T-cell (primary cell): ENCODE measurements at regions of chr9 and their contacts with region 1.

Region 1: GRCh38 chr9:131678499-131679111 is 61.3 kb downstream of the RAPGEF1 start:
- DNase-seq: peak; percentile 33 to 78 (median 61)
- ATAC-seq: peak; percentile 83 to 98 (median 97)
- H3K4me3 ChIP-seq: no peak overlapping the region
- H3K4me3 Mint-ChIP-seq: peak overlapping the region; percentile 72 to 81 (median 73)
- H3K27ac ChIP-seq: peak overlapping the region; percentile 88
- H3K27ac Mint-ChIP-seq: peak overlapping the region; percentile 91 to 96
- H3K4me1 ChIP-seq: peaks cover 23 to 58% of the 10 kb centered on the region in 2 experiments
- H3K4me1 Mint-ChIP-seq: peaks cover 92 to 95% (median 95%) of the 10 kb centered on the region in 3 donors
- H3K27me3 ChIP-seq: no peaks in the 10 kb centered on the region
- H3K27me3 Mint-ChIP-seq: no peaks in the 10 kb centered on the region

Region 2: DNA sequence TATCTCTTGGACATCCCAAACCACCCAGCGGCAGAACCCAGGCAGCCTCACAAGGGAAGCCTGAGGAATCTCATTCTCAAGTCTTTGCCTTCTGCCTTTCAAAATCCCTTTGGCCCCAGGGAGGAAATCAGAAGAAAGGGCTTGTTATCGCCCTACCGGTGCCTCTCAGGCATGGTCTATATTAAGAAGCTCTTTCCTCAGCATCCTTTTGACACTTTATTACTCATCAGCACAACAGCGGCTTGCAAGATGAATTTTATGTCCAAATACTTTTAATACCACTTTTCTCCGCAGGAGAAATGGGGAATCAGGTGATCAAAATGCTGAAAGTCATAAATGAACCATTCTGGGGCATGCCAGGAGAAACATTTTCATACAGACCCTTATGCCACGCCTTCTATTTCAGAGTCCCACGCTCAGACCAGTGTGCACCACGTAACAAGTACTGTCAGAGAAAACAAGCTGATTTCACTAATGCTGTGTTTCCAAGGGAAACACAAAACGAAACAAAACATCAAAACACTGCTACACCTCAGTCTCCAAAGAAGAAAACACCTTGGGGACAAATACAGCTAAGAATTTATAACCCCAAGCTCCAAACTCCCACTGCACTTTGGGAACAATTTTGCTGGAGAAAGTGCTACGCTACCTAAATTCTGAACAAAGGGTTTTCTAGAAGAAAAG is 31.3 kb after region 1 on chr9:
- CTCF ChIA-PET with region 1: interaction called in 1 of 2 experiments, 11 read pairs
- POLR2A ChIA-PET with region 1: interaction called, 4 to 11 read pairs
- DNase-seq: peak in 31 of 35 experiments; percentile 12 to 80 (median 49)
- ATAC-seq: peak; percentile 69 to 93 (median 73)
- H3K4me3 ChIP-seq: no peak overlapping the region
- H3K4me3 Mint-ChIP-seq: peak overlapping the region; percentile 30 to 69 (median 50)
- H3K27ac ChIP-seq: peak overlapping the region; percentile 91
- H3K27ac Mint-ChIP-seq: peak overlapping the region; percentile 92 to 96
- H3K4me1 ChIP-seq: peaks cover 13 to 79% of the 10 kb centered on the region in 2 experiments
- H3K4me1 Mint-ChIP-seq: peaks cover 79 to 89% (median 87%) of the 10 kb centered on the region in 3 donors
- H3K27me3 ChIP-seq: no peaks in the 10 kb centered on the region
- H3K27me3 Mint-ChIP-seq: no peaks in the 10 kb centered on the region

Region 3: GRCh38 chr9:131733541-131734061 is 55.0 kb after region 1 on chr9:
- CTCF ChIA-PET with region 1: interaction called in 1 of 2 experiments, 18 read pairs
- POLR2A ChIA-PET with region 1: interaction called in 1 of 2 experiments, 6 read pairs
- DNase-seq: peak in 9 of 35 experiments; percentile 18 to 71 (median 33)
- ATAC-seq: peak; percentile 1 to 7 (median 6)
- H3K4me3 ChIP-seq: peak overlapping the region; percentile 34 to 35
- H3K4me3 Mint-ChIP-seq: peak overlapping the region; percentile 65 to 82 (median 73)
- H3K27ac ChIP-seq: peak overlapping the region; percentile 93
- H3K27ac Mint-ChIP-seq: peak overlapping the region; percentile 88 to 94
- H3K4me1 ChIP-seq: peaks cover 77 to 98% of the 10 kb centered on the region in 2 experiments
- H3K4me1 Mint-ChIP-seq: peaks cover 89 to 93% (median 93%) of the 10 kb centered on the region in 3 donors
- H3K27me3 ChIP-seq: no peaks in the 10 kb centered on the region
- H3K27me3 Mint-ChIP-seq: no peaks in the 10 kb centered on the region

Region 4: GRCh38 chr9:131739980-131740648 is 61.5 kb after region 1 on chr9 and contains the start of gene RAPGEF1:
- CTCF ChIA-PET with region 1: interaction called in 1 of 2 experiments, 18 read pairs
- POLR2A ChIA-PET with region 1: no interaction called
- DNase-seq: peak; percentile 46 to 90 (median 75)
- ATAC-seq: peak; percentile 60 to 76 (median 66)
- H3K4me3 ChIP-seq: peak within 1 kb of the TSS; percentile 68 to 74
- H3K4me3 Mint-ChIP-seq: peak within 1 kb of the TSS; percentile 87 to 95 (median 90)
- H3K27ac ChIP-seq: peak within 1 kb of the TSS; percentile 54
- H3K27ac Mint-ChIP-seq: peak within 1 kb of the TSS; percentile 91 to 95
- H3K4me1 ChIP-seq: peaks cover 44 to 66% of the 10 kb centered on the region in 2 experiments
- H3K4me1 Mint-ChIP-seq: peaks cover 55 to 66% (median 65%) of the 10 kb centered on the region in 3 donors
- H3K27me3 ChIP-seq: no peaks in the 10 kb centered on the region
- H3K27me3 Mint-ChIP-seq: no peaks in the 10 kb centered on the region
- total RNA-seq, gene RAPGEF1: 97.9 to 167 (median 139) TPM